Aorta (tissue), 5 donors: ENCODE measurements at regions of chr14 and their contacts with region 1.

Region 1: DNA sequence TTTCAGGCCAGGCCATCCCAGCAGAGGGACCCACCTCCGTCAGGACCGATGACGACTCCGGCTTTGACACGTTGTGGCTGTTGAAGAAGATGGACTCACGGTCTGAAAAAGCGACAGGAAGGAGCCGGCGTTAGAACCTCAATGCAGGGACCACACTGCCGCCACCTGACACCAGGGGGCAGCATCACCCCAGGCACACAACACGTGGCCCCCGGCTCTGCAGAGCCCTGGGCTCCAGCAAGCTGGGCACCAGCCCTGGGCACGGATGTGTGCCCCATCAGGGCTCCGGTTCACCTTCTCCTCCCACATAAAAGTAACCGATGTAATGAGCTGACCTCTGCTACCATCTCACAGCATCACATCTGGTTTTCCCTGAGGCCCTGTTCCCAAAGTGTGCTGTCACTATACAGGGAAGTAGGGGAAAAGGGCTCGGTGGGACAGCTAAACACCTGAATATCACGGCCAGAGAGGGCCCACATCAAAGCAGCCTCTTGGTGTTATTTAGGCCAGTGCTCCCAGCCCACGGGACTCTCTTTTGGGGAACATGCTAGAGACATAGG is 29.0 kb downstream of the CHGA start:
- DNase-seq: peak; percentile 86 to 93
- ATAC-seq: peak; percentile 91
- H3K4me3 ChIP-seq: no peak overlapping the region
- H3K27ac ChIP-seq: peak overlapping the region in 1 of 2 donors; percentile 21
- H3K4me1 ChIP-seq: no peaks in the 10 kb centered on the region
- H3K27me3 ChIP-seq: no peaks in the 10 kb centered on the region

Region 2: DNA sequence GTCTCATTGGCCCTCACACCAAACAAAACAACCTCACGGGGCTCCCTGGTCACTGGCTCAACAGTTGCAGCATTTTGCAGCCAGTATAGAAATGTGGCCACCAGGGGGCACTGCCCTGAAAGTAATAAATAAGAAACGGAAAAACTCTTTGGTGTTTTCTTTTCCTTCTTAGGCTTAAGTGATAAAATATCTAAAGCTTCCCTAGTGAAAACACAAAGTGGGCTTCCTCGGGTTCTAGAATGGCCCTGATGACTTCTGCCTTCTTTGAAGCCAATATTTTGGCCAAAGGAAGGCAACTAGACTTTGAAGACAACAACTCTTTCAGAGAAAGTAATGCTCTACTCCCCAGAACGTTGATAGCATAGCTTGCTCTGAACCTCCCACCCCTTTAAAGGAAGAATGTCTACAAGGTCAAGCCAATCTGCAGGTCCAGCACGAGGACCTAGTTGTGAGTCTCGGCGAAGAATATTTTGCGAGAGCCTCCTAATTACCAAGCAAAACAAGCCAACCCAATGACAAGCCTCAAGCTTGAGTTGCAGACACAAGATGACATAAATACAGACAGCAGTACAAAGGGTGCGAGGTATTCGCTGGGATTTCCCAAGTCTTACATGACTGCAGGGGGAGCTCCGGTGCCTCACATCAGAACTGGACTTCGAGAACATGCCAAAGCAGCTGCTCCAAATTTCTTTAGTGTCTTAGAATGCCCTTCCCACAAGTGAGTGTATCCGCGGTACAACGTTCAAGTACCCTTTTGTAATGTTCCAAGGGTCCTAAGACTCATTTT is 161.1 kb after region 1 on chr14:
- intact Hi-C with region 1: loop called in 1 of 2 experiments (anchors 2 kb)
- DNase-seq: peak; percentile 84 to 89
- ATAC-seq: peak; percentile 30
- H3K4me3 ChIP-seq: peak overlapping the region in 1 of 2 donors; percentile 2
- H3K27ac ChIP-seq: peak overlapping the region in 1 of 2 donors; percentile 11
- H3K4me1 ChIP-seq: no peaks in the 10 kb centered on the region
- H3K27me3 ChIP-seq: no peaks in the 10 kb centered on the region